Common myeloid progenitor, CD34-positive (primary cell): ENCODE measurements at regions of chr7 and their contacts with region 1.

Region 1: GRCh38 chr7:2477447-2478398 is 1.5 kb upstream of the GRIFIN start:
- DNase-seq: peak; percentile 71 to 92 (median 89)
- H3K4me3 ChIP-seq: peak overlapping the region in 4 of 7 experiments; percentile 44 to 62 (median 50)
- H3K27ac ChIP-seq: no peak overlapping the region
- H3K4me1 ChIP-seq: peaks cover 0 to 29% (median 21%) of the 10 kb centered on the region in 4 experiments
- H3K27me3 ChIP-seq: no peaks in the 10 kb centered on the region

Region 2: DNA sequence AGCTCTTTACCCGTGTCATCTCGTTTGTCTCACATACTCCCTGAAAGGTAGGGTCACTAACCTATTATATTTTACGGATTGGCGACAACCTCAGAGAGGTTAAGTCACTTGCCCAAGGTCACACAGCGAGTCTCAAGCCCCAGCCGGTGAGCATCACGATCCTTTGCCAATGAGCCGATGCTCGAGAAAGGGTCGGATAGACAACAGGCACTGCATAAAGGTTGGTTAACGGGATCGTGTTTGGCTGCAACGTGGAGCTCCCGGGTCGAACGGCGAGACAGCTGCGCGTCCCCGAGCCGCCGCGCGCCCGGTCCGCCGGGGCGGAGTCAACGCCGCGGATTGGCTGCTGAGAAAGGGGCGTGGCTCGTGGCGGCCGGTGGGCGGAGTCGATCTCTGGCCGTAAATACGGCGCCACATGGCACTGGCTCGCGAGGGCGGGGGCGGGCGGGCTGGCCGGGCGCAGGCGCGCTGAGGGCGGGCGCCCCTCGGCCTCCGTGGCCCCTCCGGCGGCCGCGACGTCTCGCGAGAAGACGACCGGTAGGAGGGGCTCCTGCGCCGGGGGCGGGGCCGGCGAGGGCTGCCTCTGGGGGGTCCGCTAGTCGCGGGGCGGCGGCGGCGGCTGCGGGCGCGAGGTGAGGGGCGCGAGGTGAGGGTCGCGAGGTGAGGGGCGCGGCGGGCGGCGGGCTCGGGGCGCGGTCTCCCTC is 74.6 kb before region 1 on chr7 and contains the start of gene CHST12:
- CTCF ChIA-PET with region 1: no interaction called
- POLR2A ChIA-PET with region 1: no interaction called
- DNase-seq: peak; percentile 92 to 96 (median 96)
- H3K4me3 ChIP-seq: peak within 1 kb of the TSS; percentile 63 to 96 (median 90)
- H3K27ac ChIP-seq: peak within 1 kb of the TSS; percentile 54 to 86
- H3K4me1 ChIP-seq: peaks cover 7 to 86% (median 72%) of the 10 kb centered on the region in 4 experiments
- H3K27me3 ChIP-seq: no peaks in the 10 kb centered on the region

Region 3: DNA sequence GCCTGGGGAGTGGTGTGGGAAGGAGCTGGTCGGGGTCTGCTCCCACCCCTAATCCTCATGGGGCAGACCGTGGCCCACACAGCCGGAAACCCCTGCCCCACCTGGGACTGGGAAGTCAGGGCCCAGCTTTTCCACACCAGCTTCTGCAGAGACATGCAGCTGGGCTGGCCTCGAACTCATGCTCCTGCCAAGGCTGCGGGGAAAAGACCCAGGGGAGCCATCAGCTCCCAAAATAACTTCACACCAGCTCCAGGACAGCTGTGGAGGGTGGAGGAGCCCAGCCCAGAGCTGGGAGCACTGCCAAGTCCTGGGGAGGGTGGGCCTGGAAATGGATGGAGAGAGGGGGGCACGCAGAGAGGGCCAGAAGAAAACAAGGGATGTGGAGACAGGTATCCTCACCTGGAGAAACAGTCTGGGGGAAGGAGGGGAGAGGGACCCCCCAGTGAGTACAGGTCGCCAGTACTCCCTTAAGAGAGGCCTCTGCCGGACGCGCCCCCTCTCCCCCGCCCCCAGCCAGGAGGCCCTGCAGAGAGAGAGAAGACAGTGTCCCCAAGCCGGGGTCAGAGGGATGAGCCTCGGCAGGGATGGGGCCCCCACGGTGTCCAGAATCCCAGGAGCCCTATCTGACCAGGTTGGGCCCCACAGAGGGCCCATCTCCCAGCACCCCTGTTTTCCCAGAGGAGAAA is 10.0 kb after region 1 on chr7:
- CTCF ChIA-PET with region 1: interaction called, 11 read pairs
- POLR2A ChIA-PET with region 1: no interaction called
- DNase-seq: no peak
- H3K4me3 ChIP-seq: no peak overlapping the region
- H3K27ac ChIP-seq: no peak overlapping the region
- H3K4me1 ChIP-seq: peaks cover 0 to 18% (median 14%) of the 10 kb centered on the region in 4 experiments
- H3K27me3 ChIP-seq: no peaks in the 10 kb centered on the region